Naive thymus-derived CD4-positive, alpha-beta T cell (primary cell): ENCODE measurements at regions of chr11 and their contacts with region 1.

Region 1: DNA sequence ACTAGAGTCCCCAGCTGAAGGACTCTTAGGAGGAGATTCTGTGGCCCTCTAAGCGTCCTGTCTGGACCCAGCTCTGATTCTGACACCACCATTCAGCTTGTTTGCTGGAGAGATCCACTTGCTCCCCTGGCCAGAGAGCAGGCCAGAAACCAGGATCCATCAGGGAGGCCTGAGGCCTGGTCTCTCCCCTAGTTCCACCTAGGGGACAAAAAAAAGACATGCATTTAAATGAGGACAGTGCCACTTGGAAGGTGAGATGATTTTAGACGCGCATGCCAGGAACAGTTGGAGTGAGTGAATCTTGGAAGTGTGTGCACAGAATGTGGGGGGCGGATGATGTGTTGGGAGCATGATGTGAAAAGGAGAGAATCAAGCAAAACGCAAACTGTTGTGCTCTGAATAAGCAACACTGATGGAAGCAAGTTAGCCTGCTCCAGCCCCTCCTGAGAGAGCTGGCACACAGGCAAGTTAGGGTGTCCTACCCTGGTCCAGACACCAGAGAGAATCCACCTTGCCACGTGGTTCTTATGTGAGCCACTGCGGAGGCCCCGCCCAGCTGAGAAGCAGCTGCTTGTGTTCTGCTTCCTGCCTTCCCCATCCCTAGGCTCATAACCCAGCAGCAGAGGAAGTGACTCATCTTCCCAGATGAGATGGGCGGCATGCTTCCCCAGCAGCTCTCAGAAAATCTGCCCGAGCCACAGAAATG is 8.0 kb upstream of the SLCO2B1 start:
- DNase-seq: peak; percentile 24 to 75 (median 48)
- ATAC-seq: peak; percentile 89
- H3K4me3 ChIP-seq: peak overlapping the region; percentile 29
- H3K4me3 Mint-ChIP-seq: peak overlapping the region; percentile 21 to 84 (median 52)
- H3K27ac ChIP-seq: peak overlapping the region; percentile 49
- H3K27ac Mint-ChIP-seq: peak overlapping the region; percentile 71 to 92 (median 88)
- H3K4me1 ChIP-seq: peaks cover 20 to 24% of the 10 kb centered on the region in 2 donors
- H3K4me1 Mint-ChIP-seq: peaks cover 32 to 48% (median 40%) of the 10 kb centered on the region in 7 donors
- H3K27me3 ChIP-seq: no peaks in the 10 kb centered on the region
- H3K27me3 Mint-ChIP-seq: peaks cover 0 to 14% (median 0%) of the 10 kb centered on the region in 5 donors

Region 2: DNA sequence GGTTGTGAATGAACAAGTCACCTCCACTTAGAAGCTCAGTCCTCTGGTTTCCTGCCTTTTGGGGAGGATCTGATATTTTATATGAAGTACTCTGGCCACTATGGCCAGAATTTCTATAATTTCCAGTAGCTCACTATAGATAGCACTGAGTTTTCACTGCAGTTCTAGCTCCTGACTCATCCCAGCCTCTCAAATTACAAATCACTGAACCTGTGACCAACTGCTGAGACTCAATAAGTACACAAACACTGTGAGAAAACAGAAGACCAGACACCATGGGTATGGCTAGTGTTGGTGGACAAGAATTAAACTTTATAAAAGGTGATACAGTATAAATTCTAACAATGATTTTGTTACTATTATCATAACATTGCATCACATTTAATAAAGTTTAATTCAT is 1086.9 kb before region 1 on chr11:
- CTCF ChIA-PET with region 1: no interaction called
- POLR2A ChIA-PET with region 1: no interaction called
- intact Hi-C with region 1: no loop called
- DNase-seq: no peak
- ATAC-seq: no peak
- H3K4me3 ChIP-seq: no peak overlapping the region
- H3K4me3 Mint-ChIP-seq: no peak overlapping the region
- H3K27ac ChIP-seq: no peak overlapping the region
- H3K27ac Mint-ChIP-seq: peak overlapping the region in 3 of 9 donors; percentile 12 to 15 (median 13)
- H3K4me1 ChIP-seq: peaks cover 0 to 2% of the 10 kb centered on the region in 2 donors
- H3K4me1 Mint-ChIP-seq: peaks cover 0 to 3% (median 0%) of the 10 kb centered on the region in 7 donors
- H3K27me3 ChIP-seq: no peaks in the 10 kb centered on the region
- H3K27me3 Mint-ChIP-seq: no peaks in the 10 kb centered on the region

Region 3: GRCh38 chr11:74870485-74870884 is 272.4 kb before region 1 on chr11:
- CTCF ChIA-PET with region 1: no interaction called
- POLR2A ChIA-PET with region 1: no interaction called
- intact Hi-C with region 1: no loop called
- DNase-seq: no peak
- ATAC-seq: no peak
- H3K4me3 ChIP-seq: no peak overlapping the region
- H3K4me3 Mint-ChIP-seq: no peak overlapping the region
- H3K27ac ChIP-seq: no peak overlapping the region
- H3K27ac Mint-ChIP-seq: no peak overlapping the region
- H3K4me1 ChIP-seq: no peaks in the 10 kb centered on the region
- H3K4me1 Mint-ChIP-seq: no peaks in the 10 kb centered on the region
- H3K27me3 ChIP-seq: no peaks in the 10 kb centered on the region
- H3K27me3 Mint-ChIP-seq: no peaks in the 10 kb centered on the region

Region 4: GRCh38 chr11:74948898-74949747 is 193.7 kb before region 1 on chr11 and contains the starts of genes SPCS2 and XRRA1:
- CTCF ChIA-PET with region 1: interaction called, 3 read pairs
- POLR2A ChIA-PET with region 1: no interaction called
- intact Hi-C with region 1: loop called (anchors 1 to 5 kb)
- DNase-seq: peak; percentile 87 to 98 (median 97)
- ATAC-seq: peak; percentile 99
- H3K4me3 ChIP-seq: peak within 1 kb of the TSS; percentile 99
- H3K4me3 Mint-ChIP-seq: peak within 1 kb of the TSS; percentile 95 to 99 (median 96)
- H3K27ac ChIP-seq: peak within 1 kb of the TSS; percentile 78
- H3K27ac Mint-ChIP-seq: peak within 1 kb of the TSS; percentile 85 to 99 (median 96)
- H3K4me1 ChIP-seq: peaks cover 16 to 21% of the 10 kb centered on the region in 2 donors
- H3K4me1 Mint-ChIP-seq: peaks cover 30 to 86% (median 55%) of the 10 kb centered on the region in 7 donors
- H3K27me3 ChIP-seq: no peaks in the 10 kb centered on the region
- H3K27me3 Mint-ChIP-seq: no peaks in the 10 kb centered on the region
- total RNA-seq, gene SPCS2: 53.9 to 211 (median 87.5) TPM
- total RNA-seq, gene XRRA1: 11.3 to 20.8 (median 20.3) TPM

Region 5: GRCh38 chr11:75022759-75023396 is 120.0 kb before region 1 on chr11:
- CTCF ChIA-PET with region 1: interaction called, 4 read pairs
- POLR2A ChIA-PET with region 1: no interaction called
- intact Hi-C with region 1: loop called (anchors 1 to 2 kb)
- DNase-seq: peak; percentile 38 to 71 (median 66)
- ATAC-seq: peak; percentile 88
- H3K4me3 ChIP-seq: no peak overlapping the region
- H3K4me3 Mint-ChIP-seq: no peak overlapping the region
- H3K27ac ChIP-seq: no peak overlapping the region
- H3K27ac Mint-ChIP-seq: no peak overlapping the region
- H3K4me1 ChIP-seq: no peaks in the 10 kb centered on the region
- H3K4me1 Mint-ChIP-seq: no peaks in the 10 kb centered on the region
- H3K27me3 ChIP-seq: no peaks in the 10 kb centered on the region
- H3K27me3 Mint-ChIP-seq: no peaks in the 10 kb centered on the region

Region 6: GRCh38 chr11:75204685-75205563 is 62.1 kb after region 1 on chr11:
- CTCF ChIA-PET with region 1: interaction called, 164 read pairs
- POLR2A ChIA-PET with region 1: no interaction called
- intact Hi-C with region 1: loop called (anchors 1 kb)
- DNase-seq: peak; percentile 53 to 86 (median 64)
- ATAC-seq: peak; percentile 92
- H3K4me3 ChIP-seq: no peak overlapping the region
- H3K4me3 Mint-ChIP-seq: no peak overlapping the region
- H3K27ac ChIP-seq: no peak overlapping the region
- H3K27ac Mint-ChIP-seq: no peak overlapping the region
- H3K4me1 ChIP-seq: no peaks in the 10 kb centered on the region
- H3K4me1 Mint-ChIP-seq: peaks cover 0 to 2% (median 0%) of the 10 kb centered on the region in 7 donors
- H3K27me3 ChIP-seq: peaks cover 0 to 2% of the 10 kb centered on the region in 2 donors
- H3K27me3 Mint-ChIP-seq: peaks cover 0 to 9% (median 6%) of the 10 kb centered on the region in 5 donors

Region 7: DNA sequence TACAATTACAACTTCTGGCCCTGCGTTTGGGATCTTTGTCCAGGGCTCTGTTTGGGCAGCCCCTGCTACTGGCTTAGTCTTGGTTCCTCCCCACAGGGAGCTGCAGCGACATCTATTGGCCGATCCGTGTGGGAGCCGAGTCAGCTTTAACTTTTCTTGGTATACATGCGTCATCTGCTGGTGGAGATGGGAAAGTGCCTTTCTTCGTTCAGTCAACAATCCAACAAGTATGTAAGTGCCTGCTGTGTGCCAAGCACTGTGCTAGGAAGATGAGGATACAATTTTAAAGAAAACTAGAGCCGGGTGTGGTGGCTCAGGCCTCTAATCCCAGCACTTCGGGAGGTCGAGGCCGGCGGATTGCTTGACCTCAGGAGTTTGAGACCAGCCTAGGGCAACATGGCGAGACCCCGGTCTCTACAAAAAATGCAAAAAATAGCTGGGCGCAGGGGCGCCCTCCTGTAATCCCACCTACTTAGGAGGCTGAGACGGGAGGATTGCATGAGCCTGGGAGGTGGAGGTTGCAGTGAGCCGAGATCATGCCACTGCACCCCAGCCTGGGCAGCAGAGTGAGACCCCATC is 105.9 kb after region 1 on chr11:
- CTCF ChIA-PET with region 1: interaction called, 162 read pairs
- POLR2A ChIA-PET with region 1: interaction called, 6 read pairs
- intact Hi-C with region 1: loop called (anchors 1 kb)
- DNase-seq: peak; percentile 70 to 87 (median 82)
- ATAC-seq: peak; percentile 99
- H3K4me3 ChIP-seq: no peak overlapping the region
- H3K4me3 Mint-ChIP-seq: no peak overlapping the region
- H3K27ac ChIP-seq: no peak overlapping the region
- H3K27ac Mint-ChIP-seq: peak overlapping the region in 2 of 9 donors; percentile 18 to 20
- H3K4me1 ChIP-seq: no peaks in the 10 kb centered on the region
- H3K4me1 Mint-ChIP-seq: peaks cover 0 to 5% (median 4%) of the 10 kb centered on the region in 7 donors
- H3K27me3 ChIP-seq: no peaks in the 10 kb centered on the region
- H3K27me3 Mint-ChIP-seq: peaks cover 0 to 37% (median 10%) of the 10 kb centered on the region in 5 donors

Region 8: GRCh38 chr11:75280227-75280701 is 137.4 kb after region 1 on chr11:
- CTCF ChIA-PET with region 1: interaction called, 185 read pairs
- POLR2A ChIA-PET with region 1: interaction called, 57 read pairs
- intact Hi-C with region 1: no loop called
- DNase-seq: peak; percentile 56 to 83 (median 69)
- ATAC-seq: peak; percentile 78
- H3K4me3 ChIP-seq: no peak overlapping the region
- H3K4me3 Mint-ChIP-seq: peak overlapping the region in 5 of 10 donors; percentile 16 to 65 (median 60)
- H3K27ac ChIP-seq: no peak overlapping the region
- H3K27ac Mint-ChIP-seq: peak overlapping the region; percentile 79 to 99 (median 91)
- H3K4me1 ChIP-seq: peaks cover 27 to 46% of the 10 kb centered on the region in 2 donors
- H3K4me1 Mint-ChIP-seq: peaks cover 34 to 57% (median 47%) of the 10 kb centered on the region in 7 donors
- H3K27me3 ChIP-seq: no peaks in the 10 kb centered on the region
- H3K27me3 Mint-ChIP-seq: no peaks in the 10 kb centered on the region

Region 9: DNA sequence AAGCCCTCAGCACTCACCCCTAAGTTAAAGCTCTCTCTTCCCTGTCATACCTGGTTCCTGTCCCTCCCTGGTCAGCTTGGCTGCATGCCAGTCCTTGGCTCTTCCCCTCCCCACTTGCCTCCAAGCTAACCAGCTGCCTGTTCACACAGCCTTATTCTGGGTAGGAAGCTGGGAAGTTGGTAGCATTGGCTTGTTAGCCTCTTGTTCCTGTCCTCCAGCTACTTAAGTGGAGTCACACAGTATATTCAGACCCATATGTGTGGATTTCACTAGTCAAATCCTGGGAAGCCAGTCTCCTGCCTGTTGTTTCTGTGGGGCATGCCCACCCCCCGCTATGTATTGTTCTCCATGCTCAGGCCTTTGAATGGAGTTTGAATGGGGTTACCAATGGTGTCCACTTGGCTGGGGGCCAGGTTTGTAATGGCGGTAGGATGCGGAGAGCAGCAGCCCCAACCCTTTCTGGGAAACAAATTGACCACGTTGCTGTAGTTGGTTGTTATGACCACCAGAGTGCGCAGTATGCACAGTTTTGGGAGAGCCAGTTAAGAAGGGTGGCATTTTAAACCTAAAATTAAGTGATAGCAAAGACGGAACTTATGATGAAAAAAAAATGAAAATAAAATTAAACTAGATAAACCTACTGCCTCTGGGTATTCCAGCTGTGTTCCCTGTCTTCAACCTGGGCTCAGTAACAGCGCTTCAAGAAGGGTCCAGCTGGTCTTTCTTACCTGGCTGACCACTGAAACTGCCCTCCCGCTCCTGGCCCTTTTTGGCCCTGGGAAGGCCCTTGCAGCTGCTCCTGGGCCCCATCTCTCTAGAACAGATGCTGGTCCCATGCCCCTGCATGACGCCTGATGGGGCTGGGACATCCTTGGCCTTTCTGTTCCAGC is 245.8 kb after region 1 on chr11:
- CTCF ChIA-PET with region 1: interaction called, 13 read pairs
- POLR2A ChIA-PET with region 1: no interaction called
- intact Hi-C with region 1: loop called (anchors 1 to 5 kb)
- DNase-seq: peak; percentile 23 to 74 (median 64)
- ATAC-seq: peak; percentile 92
- H3K4me3 ChIP-seq: no peak overlapping the region
- H3K4me3 Mint-ChIP-seq: no peak overlapping the region
- H3K27ac ChIP-seq: no peak overlapping the region
- H3K27ac Mint-ChIP-seq: no peak overlapping the region
- H3K4me1 ChIP-seq: peaks cover 5 to 10% of the 10 kb centered on the region in 2 donors
- H3K4me1 Mint-ChIP-seq: peaks cover 10 to 13% (median 12%) of the 10 kb centered on the region in 7 donors
- H3K27me3 ChIP-seq: no peaks in the 10 kb centered on the region
- H3K27me3 Mint-ChIP-seq: peaks cover 0 to 22% (median 0%) of the 10 kb centered on the region in 5 donors